B cell (primary cell): ENCODE measurements at regions of chr19 and their contacts with region 1.

Region 1: DNA sequence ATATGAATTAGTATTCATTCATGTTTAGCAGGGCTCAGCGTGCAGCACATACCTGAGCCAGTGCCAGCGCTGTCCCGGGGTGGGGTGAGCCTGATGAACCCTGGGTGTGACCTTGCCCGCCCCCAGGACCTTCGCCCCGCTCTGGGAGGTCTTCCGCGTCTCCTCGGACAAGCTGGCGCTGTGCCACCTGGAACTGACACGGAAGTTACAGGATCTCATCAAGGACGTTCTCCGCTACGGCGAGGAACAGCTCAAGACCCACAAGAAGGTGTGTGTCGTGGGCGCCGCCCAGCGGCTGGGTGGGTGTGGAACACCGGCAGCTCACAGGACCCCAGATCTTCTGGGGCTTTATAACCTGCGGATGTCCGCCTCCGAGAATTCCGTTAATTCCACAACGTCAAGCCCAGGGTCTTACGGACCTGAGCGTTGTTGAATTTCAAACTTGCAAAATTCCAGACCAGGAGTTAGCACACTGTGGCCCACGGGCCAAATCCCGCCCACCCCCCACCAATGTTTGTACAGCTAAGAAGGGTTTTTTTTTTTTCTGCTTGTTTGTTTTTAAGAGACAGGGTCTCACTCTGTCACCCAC is 15.4 kb downstream of the FCHO1 start:
- DNase-seq: peak; percentile 74
- ATAC-seq: peak; percentile 62
- H3K4me3 ChIP-seq: no peak overlapping the region
- H3K4me3 Mint-ChIP-seq: peak overlapping the region; percentile 29
- H3K27ac ChIP-seq: no peak overlapping the region
- H3K27ac Mint-ChIP-seq: peak overlapping the region; percentile 72
- H3K4me1 ChIP-seq: peaks cover 4 to 12% of the 10 kb centered on the region in 2 donors
- H3K4me1 Mint-ChIP-seq: peaks cover 20% of the 10 kb centered on the region
- H3K27me3 ChIP-seq: no peaks in the 10 kb centered on the region
- H3K27me3 Mint-ChIP-seq: no peaks in the 10 kb centered on the region
- CTCF ChIP-seq: peak; percentile 78

Region 2: GRCh38 chr19:17565611-17566010 is 201.0 kb before region 1 on chr19:
- CTCF ChIA-PET with region 1: no interaction called
- POLR2A ChIA-PET with region 1: no interaction called
- intact Hi-C with region 1: no loop called
- DNase-seq: no peak
- ATAC-seq: no peak
- H3K4me3 ChIP-seq: no peak overlapping the region
- H3K4me3 Mint-ChIP-seq: no peak overlapping the region
- H3K27ac ChIP-seq: no peak overlapping the region
- H3K27ac Mint-ChIP-seq: no peak overlapping the region
- H3K4me1 ChIP-seq: no peaks in the 10 kb centered on the region
- H3K4me1 Mint-ChIP-seq: peaks cover 2% of the 10 kb centered on the region
- H3K27me3 ChIP-seq: no peaks in the 10 kb centered on the region
- H3K27me3 Mint-ChIP-seq: no peaks in the 10 kb centered on the region
- CTCF ChIP-seq: no peak

Region 3: GRCh38 chr19:17703824-17704463 is 62.7 kb before region 1 on chr19:
- CTCF ChIA-PET with region 1: interaction called, 137 read pairs
- POLR2A ChIA-PET with region 1: interaction called, 3 read pairs
- intact Hi-C with region 1: loop called (anchors 1 kb)
- DNase-seq: peak; percentile 80
- ATAC-seq: peak; percentile 93
- H3K4me3 ChIP-seq: no peak overlapping the region
- H3K4me3 Mint-ChIP-seq: no peak overlapping the region
- H3K27ac ChIP-seq: no peak overlapping the region
- H3K27ac Mint-ChIP-seq: peak overlapping the region; percentile 11
- H3K4me1 ChIP-seq: no peaks in the 10 kb centered on the region
- H3K4me1 Mint-ChIP-seq: peaks cover 5% of the 10 kb centered on the region
- H3K27me3 ChIP-seq: peaks cover 0 to 9% (median under 1%) of the 10 kb centered on the region in 4 experiments
- H3K27me3 Mint-ChIP-seq: peaks cover 11% of the 10 kb centered on the region
- CTCF ChIP-seq: peak; percentile 87

Region 4: DNA sequence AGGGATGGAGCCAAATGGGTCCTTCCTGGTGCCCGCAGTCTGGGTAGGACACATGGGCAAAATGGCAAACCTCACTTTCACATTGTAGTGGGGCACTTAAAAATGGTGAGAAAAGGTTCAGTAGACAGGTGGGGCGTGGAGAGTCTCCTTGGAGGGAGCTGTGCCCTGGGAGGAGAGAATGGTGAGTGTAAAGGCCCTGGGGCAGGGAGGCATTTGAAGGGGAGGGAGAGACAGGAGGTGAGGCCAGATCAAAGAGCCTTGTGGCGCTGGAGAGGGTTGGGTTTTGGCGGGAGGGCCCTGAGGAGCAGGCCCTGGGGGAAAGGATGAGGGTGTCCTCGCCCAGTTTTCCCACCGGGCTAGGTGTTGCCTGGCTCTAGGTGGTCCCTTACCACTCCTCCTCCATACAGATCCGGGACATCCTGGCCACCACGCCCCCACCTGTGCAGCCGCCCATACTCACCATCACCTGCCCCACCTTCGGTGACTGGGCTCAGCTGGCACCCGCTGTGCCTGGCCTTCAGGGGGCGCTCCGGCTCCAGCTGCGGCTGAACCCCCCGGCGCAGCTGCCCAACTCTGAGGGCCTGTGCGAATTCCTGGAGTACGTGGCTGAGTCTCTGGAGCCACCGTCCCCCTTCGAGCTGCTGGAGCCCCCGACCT is 41.1 kb before region 1 on chr19:
- CTCF ChIA-PET with region 1: interaction called, 31 read pairs
- POLR2A ChIA-PET with region 1: interaction called, 3 read pairs
- intact Hi-C with region 1: no loop called
- DNase-seq: peak; percentile 41
- ATAC-seq: peak; percentile 41
- H3K4me3 ChIP-seq: no peak overlapping the region
- H3K4me3 Mint-ChIP-seq: no peak overlapping the region
- H3K27ac ChIP-seq: no peak overlapping the region
- H3K27ac Mint-ChIP-seq: no peak overlapping the region
- H3K4me1 ChIP-seq: peaks cover 16 to 18% of the 10 kb centered on the region in 2 donors
- H3K4me1 Mint-ChIP-seq: peaks cover 25% of the 10 kb centered on the region
- H3K27me3 ChIP-seq: no peaks in the 10 kb centered on the region
- H3K27me3 Mint-ChIP-seq: no peaks in the 10 kb centered on the region
- CTCF ChIP-seq: peak; percentile 66

Region 5: DNA sequence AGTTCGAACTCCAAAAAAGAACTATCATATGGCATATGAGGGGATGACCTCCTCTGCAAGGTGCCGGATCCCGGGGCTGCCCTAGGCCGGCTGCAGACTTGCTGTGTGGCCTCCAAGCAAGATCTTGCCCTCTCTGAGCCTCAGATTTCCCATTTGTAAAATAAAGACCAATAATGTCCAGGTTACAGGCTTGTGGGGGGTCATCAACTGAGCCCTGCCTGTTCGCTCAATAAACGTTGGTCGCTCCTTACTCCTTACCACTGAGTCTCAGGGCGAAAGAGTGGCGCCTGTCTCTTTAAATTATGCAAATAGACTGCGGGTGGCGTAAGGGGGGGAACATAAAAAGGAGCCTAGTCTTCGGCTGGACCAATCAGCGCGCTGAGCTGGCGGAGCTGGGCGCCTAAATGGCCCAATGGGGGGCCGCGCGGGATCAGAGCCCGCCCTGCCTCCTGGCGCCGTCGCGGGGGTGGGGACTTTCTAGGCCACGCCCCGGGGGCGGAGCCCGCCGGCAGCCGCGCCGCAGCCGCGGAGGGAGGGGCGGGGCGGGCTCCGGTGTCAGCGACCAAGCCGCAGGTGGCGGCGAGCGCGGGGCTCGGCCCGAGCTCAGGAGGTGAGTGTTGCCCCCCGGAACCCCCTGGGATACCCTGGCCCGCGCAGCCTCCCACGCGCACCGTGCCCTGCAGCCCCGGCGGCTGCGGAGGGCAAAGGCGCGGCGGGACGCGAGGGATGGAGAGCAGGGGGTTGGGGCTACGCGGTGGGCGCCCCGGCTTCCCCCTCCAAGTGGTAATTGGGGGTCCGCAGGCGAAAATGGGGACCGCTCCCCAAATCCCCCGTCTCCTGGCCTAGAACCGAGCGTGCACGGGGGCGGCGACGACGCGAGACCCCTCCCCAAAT is 19.2 kb before region 1 on chr19:
- CTCF ChIA-PET with region 1: interaction called, 122 read pairs
- POLR2A ChIA-PET with region 1: interaction called, 4 read pairs
- intact Hi-C with region 1: no loop called
- DNase-seq: peak; percentile 97
- ATAC-seq: peak; percentile 80
- H3K4me3 ChIP-seq: peak overlapping the region; percentile 38 to 72 (median 70)
- H3K4me3 Mint-ChIP-seq: peak overlapping the region; percentile 89
- H3K27ac ChIP-seq: peak overlapping the region in 1 of 2 donors; percentile 26
- H3K27ac Mint-ChIP-seq: peak overlapping the region; percentile 71
- H3K4me1 ChIP-seq: peaks cover 38 to 60% of the 10 kb centered on the region in 2 donors
- H3K4me1 Mint-ChIP-seq: peaks cover 51% of the 10 kb centered on the region
- H3K27me3 ChIP-seq: no peaks in the 10 kb centered on the region
- H3K27me3 Mint-ChIP-seq: no peaks in the 10 kb centered on the region
- CTCF ChIP-seq: no peak